Activated CD4-positive, alpha-beta T cell treated with anti-CD3 and anti-CD28 coated beads, Interleukin-2, amount 10 ng/mL, durations not matched to agents 24 days and 14 days (primary cell): ENCODE measurements at regions of chr1 and their contacts with region 1.

Region 1: DNA sequence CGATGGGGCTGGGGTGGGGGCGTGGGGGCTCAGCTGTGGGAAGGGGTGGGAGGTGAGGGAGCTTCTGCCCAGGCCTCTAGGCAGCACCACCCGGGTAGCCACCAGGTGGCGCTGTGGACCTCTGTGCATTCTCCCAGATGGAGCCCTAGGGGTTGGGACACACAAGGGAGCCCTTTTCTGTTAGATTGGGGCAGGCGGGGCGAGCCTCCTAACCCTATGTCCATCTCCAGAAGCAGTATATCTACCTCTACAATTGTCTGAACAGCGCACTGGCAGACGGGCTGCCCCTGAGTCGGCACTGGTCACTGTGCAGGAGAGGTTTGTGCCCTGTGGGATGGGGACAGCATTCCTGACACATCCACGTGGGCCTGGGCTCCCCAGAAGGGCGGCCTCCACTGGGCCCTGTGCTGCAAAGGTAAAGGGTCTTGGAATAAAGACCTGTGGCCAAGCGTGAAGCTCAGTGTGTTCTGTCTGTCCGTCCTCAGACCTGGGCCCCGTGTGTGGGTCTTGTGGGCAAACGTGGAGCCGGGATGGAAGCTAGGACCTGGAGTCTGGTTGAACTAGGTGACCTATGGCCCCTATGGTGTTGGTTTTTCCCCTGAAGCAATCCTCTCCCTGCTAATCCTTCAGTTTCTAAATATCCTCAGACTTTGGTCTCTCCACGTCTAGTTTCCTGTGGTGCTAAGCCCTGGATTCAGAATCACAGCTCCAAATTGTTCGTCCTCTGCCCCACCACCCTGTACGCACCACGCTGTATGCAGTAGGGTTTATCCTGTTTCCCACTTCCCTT is 4.4 kb upstream of the LGR6 start:
- DNase-seq: peak; percentile 94
- H3K4me3 Mint-ChIP-seq: no peak overlapping the region
- H3K27ac Mint-ChIP-seq: no peak overlapping the region
- H3K4me1 Mint-ChIP-seq: peaks cover 7% of the 10 kb centered on the region
- H3K27me3 Mint-ChIP-seq: peaks cover 10% of the 10 kb centered on the region

Region 2: GRCh38 chr1:201614262-201615015 is 574.8 kb before region 1 on chr1:
- intact Hi-C with region 1: no loop called
- DNase-seq: no peak
- H3K4me3 Mint-ChIP-seq: no peak overlapping the region
- H3K27ac Mint-ChIP-seq: no peak overlapping the region
- H3K4me1 Mint-ChIP-seq: no peaks in the 10 kb centered on the region
- H3K27me3 Mint-ChIP-seq: peaks cover 11% of the 10 kb centered on the region

Region 3: GRCh38 chr1:202315576-202316168 is 126.5 kb after region 1 on chr1:
- intact Hi-C with region 1: loop called (anchors 1 kb)
- DNase-seq: peak; percentile 92
- H3K4me3 Mint-ChIP-seq: no peak overlapping the region
- H3K27ac Mint-ChIP-seq: no peak overlapping the region
- H3K4me1 Mint-ChIP-seq: peaks cover 7% of the 10 kb centered on the region
- H3K27me3 Mint-ChIP-seq: peaks cover 24% of the 10 kb centered on the region

Region 4: GRCh38 chr1:202713110-202713509 is 523.9 kb after region 1 on chr1:
- intact Hi-C with region 1: loop called (anchors 2 kb)
- DNase-seq: no peak
- H3K4me3 Mint-ChIP-seq: no peak overlapping the region
- H3K27ac Mint-ChIP-seq: no peak overlapping the region
- H3K4me1 Mint-ChIP-seq: no peaks in the 10 kb centered on the region
- H3K27me3 Mint-ChIP-seq: peaks cover 70% of the 10 kb centered on the region